ENCODE measurements at regions of chr5 and their contacts with region 1.

Region 1: GRCh38 chr5:76601470-76601869 is 21.7 kb downstream of the F2RL2 start:
- DNase-seq: peak; percentile 42
- CTCF ChIP-seq: peak; percentile 64

Region 2: GRCh38 chr5:76556511-76557221 is 44.8 kb before region 1 on chr5:
- CTCF ChIA-PET with region 1: no interaction called
- POLR2A ChIA-PET with region 1: no interaction called
- DNase-seq: peak; percentile 77
- CTCF ChIP-seq: no peak

Region 3: DNA sequence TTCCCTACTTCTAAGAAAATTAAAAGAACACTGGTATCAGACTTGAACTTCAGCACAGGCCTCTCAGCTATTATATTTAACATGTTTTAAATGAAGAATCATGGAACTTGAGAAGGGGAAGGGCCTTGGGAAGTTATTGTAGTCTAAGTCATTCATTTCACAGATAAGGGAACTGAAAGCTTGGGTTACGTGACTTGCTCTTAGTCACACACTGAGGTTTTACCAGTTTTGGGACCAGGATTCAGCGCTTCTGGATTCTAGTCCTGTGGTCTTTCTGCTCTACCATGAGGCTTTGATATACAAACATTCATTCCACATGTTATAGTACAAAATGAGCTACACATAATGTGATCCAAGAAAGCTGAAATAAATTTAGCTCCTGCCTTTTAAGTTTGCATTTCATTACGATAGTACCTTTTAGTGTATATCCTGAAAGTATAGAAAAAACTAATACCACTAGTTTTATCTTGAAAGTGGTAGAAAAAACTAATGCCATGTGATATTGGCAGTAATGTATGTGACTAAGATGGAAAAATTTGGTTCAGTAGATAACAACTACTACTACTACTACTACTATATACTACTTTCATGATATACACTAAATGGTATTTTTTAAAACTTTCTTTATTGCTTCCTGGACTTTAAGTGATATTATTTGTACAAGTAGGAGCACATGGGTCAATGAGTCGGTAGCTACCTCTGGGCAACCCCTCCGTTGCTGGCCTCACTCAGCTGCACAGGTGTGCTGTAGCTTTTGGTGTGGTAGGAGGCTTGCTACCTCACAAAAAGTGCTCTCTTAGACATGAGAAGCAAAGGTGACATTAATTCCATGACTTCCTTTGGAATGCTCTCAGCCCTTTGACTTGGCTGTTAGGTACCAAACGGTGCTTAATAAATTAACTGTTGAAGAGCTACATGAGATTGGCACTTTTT is 19.0 kb before region 1 on chr5:
- CTCF ChIA-PET with region 1: interaction called, 17 read pairs
- POLR2A ChIA-PET with region 1: no interaction called
- DNase-seq: peak; percentile 45
- CTCF ChIP-seq: no peak

Region 4: GRCh38 chr5:76590027-76590426 is 11.4 kb before region 1 on chr5:
- CTCF ChIA-PET with region 1: interaction called, 31 read pairs
- POLR2A ChIA-PET with region 1: no interaction called
- DNase-seq: peak; percentile 60
- CTCF ChIP-seq: no peak

Region 5: DNA sequence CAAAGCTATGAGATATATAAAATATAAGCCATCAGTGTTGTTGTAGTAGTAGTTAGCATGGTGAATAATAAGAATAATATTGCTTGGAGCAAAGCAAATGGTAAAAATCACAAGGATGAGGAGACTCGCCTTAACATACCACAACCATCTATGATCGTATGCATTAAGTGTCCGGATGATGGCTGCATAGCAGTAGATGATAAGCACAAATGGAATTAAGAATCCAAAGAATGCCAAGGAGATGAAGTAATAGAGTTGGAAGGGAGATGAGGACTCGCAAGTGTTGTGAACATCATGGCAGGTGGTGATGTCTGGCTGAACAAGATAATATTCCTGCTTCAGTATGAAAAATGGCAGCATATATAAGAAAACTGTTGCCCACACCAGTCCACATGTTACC is 16.2 kb after region 1 on chr5:
- CTCF ChIA-PET with region 1: interaction called, 35 read pairs
- POLR2A ChIA-PET with region 1: no interaction called
- DNase-seq: no peak
- CTCF ChIP-seq: no peak

Region 6: DNA sequence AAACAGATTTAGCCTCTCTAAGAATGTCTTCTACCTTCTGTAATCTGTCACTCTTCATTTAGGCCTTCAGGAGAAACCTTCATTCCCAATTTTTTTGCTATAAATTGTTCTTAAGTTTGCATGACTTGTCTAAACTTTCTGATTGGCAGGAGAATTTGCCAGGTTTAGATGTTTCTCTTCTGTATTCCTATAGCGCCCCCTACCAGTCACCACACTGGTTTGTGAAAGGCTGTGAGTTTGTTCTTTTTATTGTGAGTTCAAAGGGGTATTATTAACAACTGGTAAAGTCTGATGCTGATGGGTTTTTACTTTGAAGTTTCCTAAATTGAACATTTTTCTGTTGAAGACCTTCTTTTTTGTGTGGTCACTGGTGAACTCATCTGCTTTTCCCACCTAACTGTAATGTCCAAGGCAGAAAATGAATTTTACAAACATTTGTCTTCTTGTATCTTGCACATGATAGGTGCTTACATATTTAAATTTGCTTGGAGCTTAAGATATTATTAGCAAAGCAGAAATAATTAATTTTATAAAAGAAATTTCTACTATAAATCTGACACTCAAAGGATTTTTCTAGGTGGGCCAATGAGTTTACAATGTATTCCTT is 40.1 kb after region 1 on chr5:
- CTCF ChIA-PET with region 1: interaction called, 54 read pairs
- POLR2A ChIA-PET with region 1: no interaction called
- DNase-seq: peak; percentile 53
- CTCF ChIP-seq: peak; percentile 69